ENCODE measurements at regions of chr21 and their contacts with region 1.

Region 1: DNA sequence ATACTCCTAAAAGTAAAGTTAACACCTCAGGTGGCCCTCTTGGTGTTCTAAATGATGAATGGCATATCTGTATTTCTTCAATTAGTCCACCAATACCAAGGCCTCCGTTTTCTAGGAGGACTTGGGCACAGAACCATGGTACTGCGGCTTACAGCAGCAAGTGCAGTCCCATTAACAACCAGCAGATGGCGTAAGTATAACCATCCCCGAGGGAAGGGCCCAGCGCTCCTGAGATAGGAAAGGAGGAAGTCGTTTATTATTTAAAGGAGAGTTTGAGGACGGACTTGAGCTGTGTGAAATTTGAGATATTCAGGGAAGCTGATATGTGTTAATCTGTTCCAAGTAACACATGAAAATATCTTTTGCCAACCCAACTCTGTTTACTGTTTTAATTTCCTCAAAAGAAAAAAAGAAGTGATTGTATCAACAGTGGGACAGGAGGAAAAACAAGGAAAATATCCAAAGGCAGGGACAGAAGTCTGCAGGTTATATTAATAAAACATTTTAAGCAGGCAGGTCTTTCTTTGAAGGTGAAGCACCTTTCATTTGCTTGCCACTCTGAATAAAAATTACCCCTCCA is 37.7 kb upstream of the KCNJ15 start:
- DNase-seq: peak; percentile 87
- H3K4me3 ChIP-seq: no peak overlapping the region
- H3K27ac ChIP-seq: no peak overlapping the region
- H3K4me1 ChIP-seq: peaks cover 7% of the 10 kb centered on the region
- H3K27me3 ChIP-seq: no peaks in the 10 kb centered on the region
- CTCF ChIP-seq: peak; percentile 87 to 91
- POLR2A ChIP-seq: no peak

Region 2: GRCh38 chr21:38159355-38159754 is 59.8 kb before region 1 on chr21:
- CTCF ChIA-PET with region 1: interaction called, 5 read pairs
- POLR2A ChIA-PET with region 1: no interaction called
- dilution Hi-C with region 1: no loop called
- intact Hi-C with region 1: loop called (anchors 1 kb)
- DNase-seq: peak; percentile 81
- H3K4me3 ChIP-seq: no peak overlapping the region
- H3K27ac ChIP-seq: no peak overlapping the region
- H3K4me1 ChIP-seq: no peaks in the 10 kb centered on the region
- H3K27me3 ChIP-seq: peaks cover 20 to 29% of the 10 kb centered on the region in 2 experiments
- CTCF ChIP-seq: peak; percentile 84 to 93
- POLR2A ChIP-seq: no peak

Region 3: GRCh38 chr21:38229260-38229868 is 10.2 kb after region 1 on chr21:
- CTCF ChIA-PET with region 1: interaction called, 10 read pairs
- POLR2A ChIA-PET with region 1: no interaction called
- dilution Hi-C with region 1: no loop called
- intact Hi-C with region 1: no loop called
- DNase-seq: no peak
- H3K4me3 ChIP-seq: no peak overlapping the region
- H3K27ac ChIP-seq: no peak overlapping the region
- H3K4me1 ChIP-seq: no peaks in the 10 kb centered on the region
- H3K27me3 ChIP-seq: no peaks in the 10 kb centered on the region
- CTCF ChIP-seq: no peak
- POLR2A ChIP-seq: no peak

Region 4: DNA sequence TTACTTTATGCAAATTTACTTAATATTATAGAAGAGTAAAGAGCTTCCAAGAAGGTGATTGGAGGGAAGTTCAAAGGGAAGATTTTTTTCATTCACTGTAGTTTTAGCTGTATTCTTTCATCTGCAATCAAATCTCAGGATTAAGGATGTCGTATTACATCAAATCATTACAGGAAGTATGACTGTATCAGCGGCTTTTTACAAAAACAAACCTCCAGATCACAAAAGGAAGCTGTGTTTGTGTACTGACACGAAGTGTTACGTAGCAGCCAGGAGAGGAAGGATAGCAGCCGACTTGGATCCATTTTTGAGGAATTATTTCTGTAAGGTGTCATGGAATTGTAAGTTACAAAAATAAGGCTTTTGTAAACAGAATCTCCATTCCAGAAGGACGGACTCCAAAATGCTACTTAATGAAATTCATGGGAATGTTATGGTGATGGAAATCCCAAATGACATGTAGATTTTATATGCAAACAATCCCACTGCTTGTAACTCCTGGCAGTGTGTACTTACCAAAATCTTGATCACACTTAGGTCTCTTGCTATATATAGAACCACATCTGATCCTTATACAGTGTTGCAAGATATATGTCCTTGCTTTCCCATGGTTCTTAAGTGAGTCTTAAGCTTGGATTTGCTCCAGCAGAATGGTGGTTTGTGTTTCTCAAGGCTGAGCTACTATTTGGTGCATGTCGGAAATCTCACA is 87.4 kb after region 1 on chr21:
- CTCF ChIA-PET with region 1: interaction called, 20 read pairs
- POLR2A ChIA-PET with region 1: no interaction called
- dilution Hi-C with region 1: no loop called
- intact Hi-C with region 1: no loop called
- DNase-seq: peak; percentile 90
- H3K4me3 ChIP-seq: no peak overlapping the region
- H3K27ac ChIP-seq: peak overlapping the region; percentile 43
- H3K4me1 ChIP-seq: peaks cover 25% of the 10 kb centered on the region
- H3K27me3 ChIP-seq: no peaks in the 10 kb centered on the region
- CTCF ChIP-seq: no peak
- POLR2A ChIP-seq: no peak

Region 5: DNA sequence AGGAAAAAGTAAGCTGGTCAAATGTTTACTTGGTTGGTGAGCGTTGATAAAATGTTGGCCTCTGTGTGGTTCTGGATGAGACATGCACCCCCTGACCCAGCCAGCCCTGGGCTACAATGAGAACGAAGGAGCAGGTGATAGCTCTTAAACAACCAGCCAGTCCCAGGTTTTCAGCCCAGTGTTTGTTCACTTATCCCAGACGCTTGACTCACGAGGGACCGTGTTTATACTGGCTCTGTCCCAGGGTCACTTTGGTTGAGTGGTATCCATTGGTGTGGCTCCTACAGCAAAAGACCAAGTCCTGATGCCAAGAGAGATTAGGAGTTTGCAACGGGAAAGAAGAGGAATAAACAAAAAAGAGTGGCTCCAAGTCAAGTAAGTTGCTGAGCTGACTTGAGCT is 124.6 kb after region 1 on chr21:
- CTCF ChIA-PET with region 1: interaction called, 386 read pairs
- POLR2A ChIA-PET with region 1: no interaction called
- dilution Hi-C with region 1: no loop called
- intact Hi-C with region 1: no loop called
- DNase-seq: peak; percentile 89
- H3K4me3 ChIP-seq: no peak overlapping the region
- H3K27ac ChIP-seq: peak overlapping the region; percentile 40
- H3K4me1 ChIP-seq: peaks cover 15% of the 10 kb centered on the region
- H3K27me3 ChIP-seq: no peaks in the 10 kb centered on the region
- CTCF ChIP-seq: no peak
- POLR2A ChIP-seq: no peak

Region 6: GRCh38 chr21:38544661-38545060 is 325.5 kb after region 1 on chr21:
- CTCF ChIA-PET with region 1: no interaction called
- POLR2A ChIA-PET with region 1: no interaction called
- dilution Hi-C with region 1: no loop called
- intact Hi-C with region 1: no loop called
- DNase-seq: no peak
- H3K4me3 ChIP-seq: no peak overlapping the region
- H3K27ac ChIP-seq: no peak overlapping the region
- H3K4me1 ChIP-seq: no peaks in the 10 kb centered on the region
- H3K27me3 ChIP-seq: peaks cover 0 to 2% of the 10 kb centered on the region in 2 experiments
- CTCF ChIP-seq: no peak
- POLR2A ChIP-seq: no peak